Activated B cell treated with CpG ODN at 0.5 μM for 24 hours (primary cell): ENCODE measurements at regions of chr5 and their contacts with region 1.

Region 1: GRCh38 chr5:159156426-159157238 is 52.7 kb downstream of the RNF145 start:
- DNase-seq: no peak
- ATAC-seq: peak; percentile 53
- H3K4me3 Mint-ChIP-seq: peak overlapping the region; percentile 50
- H3K27ac Mint-ChIP-seq: peak overlapping the region; percentile 85
- H3K4me1 Mint-ChIP-seq: peaks cover 36% of the 10 kb centered on the region
- H3K27me3 Mint-ChIP-seq: no peaks in the 10 kb centered on the region
- CTCF ChIP-seq: peak; percentile 78

Region 2: DNA sequence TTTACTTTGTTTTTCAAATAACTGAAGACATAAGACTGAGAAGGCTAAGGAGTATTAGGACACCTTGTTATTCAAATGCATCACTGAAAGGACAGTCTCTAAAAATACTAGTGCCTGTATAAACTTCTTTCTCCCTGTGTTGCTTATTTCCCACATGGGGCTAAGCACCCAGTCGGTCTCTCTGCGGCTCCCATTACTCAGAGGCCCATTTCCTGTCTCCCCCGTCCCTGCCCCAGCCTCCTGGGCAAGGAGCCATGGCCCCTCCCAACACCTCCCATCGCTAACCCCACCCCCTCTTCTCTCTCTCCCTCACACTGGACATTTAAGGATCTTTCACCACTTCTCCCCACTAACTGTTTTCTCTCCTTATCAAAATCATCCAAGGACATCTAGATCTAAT is 138.8 kb before region 1 on chr5:
- CTCF ChIA-PET with region 1: no interaction called
- POLR2A ChIA-PET with region 1: no interaction called
- intact Hi-C with region 1: no loop called
- DNase-seq: no peak
- ATAC-seq: no peak
- H3K4me3 Mint-ChIP-seq: peak overlapping the region; percentile 7
- H3K27ac Mint-ChIP-seq: no peak overlapping the region
- H3K4me1 Mint-ChIP-seq: peaks cover 79% of the 10 kb centered on the region
- H3K27me3 Mint-ChIP-seq: no peaks in the 10 kb centered on the region
- CTCF ChIP-seq: no peak

Region 3: GRCh38 chr5:159198063-159199036 is 41.7 kb after region 1 on chr5:
- CTCF ChIA-PET with region 1: interaction called, 15 read pairs
- POLR2A ChIA-PET with region 1: interaction called, 3 read pairs
- intact Hi-C with region 1: loop called (anchors 2 kb)
- DNase-seq: no peak
- ATAC-seq: peak; percentile 98
- H3K4me3 Mint-ChIP-seq: peak overlapping the region; percentile 73
- H3K27ac Mint-ChIP-seq: peak overlapping the region; percentile 91
- H3K4me1 Mint-ChIP-seq: peaks cover 57% of the 10 kb centered on the region
- H3K27me3 Mint-ChIP-seq: no peaks in the 10 kb centered on the region
- CTCF ChIP-seq: no peak

Region 4: DNA sequence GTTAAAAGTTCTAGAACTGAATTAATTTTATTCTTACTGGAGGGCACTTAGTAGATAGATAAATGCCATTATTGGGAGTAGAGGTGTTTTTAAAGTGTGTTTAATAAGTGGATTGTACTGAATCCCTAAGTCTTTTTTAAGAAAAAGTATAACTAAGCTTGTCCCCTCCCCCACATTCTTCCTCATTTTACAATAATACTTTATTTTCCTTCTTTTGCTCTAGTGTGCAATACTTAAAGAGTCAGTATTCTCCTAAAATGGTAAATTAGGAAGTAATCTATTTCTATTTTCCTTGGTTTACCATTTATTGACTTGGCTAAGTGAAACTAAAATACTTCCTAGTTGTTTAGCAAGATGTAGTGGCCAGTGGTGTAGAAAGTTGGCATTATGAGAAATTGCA is 118.0 kb after region 1 on chr5:
- CTCF ChIA-PET with region 1: interaction called, 20 read pairs
- POLR2A ChIA-PET with region 1: no interaction called
- intact Hi-C with region 1: no loop called
- DNase-seq: no peak
- ATAC-seq: no peak
- H3K4me3 Mint-ChIP-seq: no peak overlapping the region
- H3K27ac Mint-ChIP-seq: no peak overlapping the region
- H3K4me1 Mint-ChIP-seq: peaks cover 5% of the 10 kb centered on the region
- H3K27me3 Mint-ChIP-seq: no peaks in the 10 kb centered on the region
- CTCF ChIP-seq: no peak

Region 5: DNA sequence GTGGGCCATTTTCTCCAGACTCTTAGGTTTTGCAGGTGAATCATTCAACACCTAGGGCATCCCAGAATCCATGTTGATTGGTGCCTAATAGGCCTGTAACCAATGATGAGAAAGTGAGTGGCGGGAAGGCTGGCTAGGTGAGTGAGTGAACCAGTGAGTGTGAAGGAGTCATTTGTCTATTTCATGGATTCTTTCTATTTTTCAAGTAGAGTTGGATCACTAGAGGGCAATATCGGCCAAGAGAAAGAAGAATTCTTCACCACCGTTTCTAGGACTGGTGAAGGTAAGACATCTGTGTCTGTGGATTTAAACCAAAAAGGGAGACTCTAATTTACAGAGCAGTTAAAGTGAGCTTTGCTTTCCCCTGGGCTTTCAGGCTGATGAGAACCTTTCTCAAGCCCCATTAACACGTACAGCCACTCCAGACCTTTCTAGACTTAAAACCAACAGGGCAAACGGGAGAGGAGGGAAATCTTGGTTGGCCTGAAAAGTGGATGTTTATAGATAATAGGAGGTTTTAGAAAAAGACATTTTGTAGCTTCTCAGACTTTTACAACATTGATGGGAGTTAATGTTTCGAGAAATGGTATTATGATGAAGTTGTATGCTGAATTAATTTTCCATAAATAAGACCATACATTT is 287.9 kb after region 1 on chr5:
- CTCF ChIA-PET with region 1: interaction called, 7 read pairs
- POLR2A ChIA-PET with region 1: no interaction called
- intact Hi-C with region 1: loop called (anchors 1 kb)
- DNase-seq: no peak
- ATAC-seq: peak; percentile 67
- H3K4me3 Mint-ChIP-seq: no peak overlapping the region
- H3K27ac Mint-ChIP-seq: no peak overlapping the region
- H3K4me1 Mint-ChIP-seq: peaks cover 6% of the 10 kb centered on the region
- H3K27me3 Mint-ChIP-seq: no peaks in the 10 kb centered on the region
- CTCF ChIP-seq: no peak

Region 6: GRCh38 chr5:159965031-159965837 is 808.6 kb after region 1 on chr5:
- CTCF ChIA-PET with region 1: interaction called, 5 read pairs
- POLR2A ChIA-PET with region 1: no interaction called
- intact Hi-C with region 1: loop called (anchors 5 kb)
- DNase-seq: no peak
- ATAC-seq: no peak
- H3K4me3 Mint-ChIP-seq: no peak overlapping the region
- H3K27ac Mint-ChIP-seq: no peak overlapping the region
- H3K4me1 Mint-ChIP-seq: no peaks in the 10 kb centered on the region
- H3K27me3 Mint-ChIP-seq: peaks cover 42% of the 10 kb centered on the region
- CTCF ChIP-seq: no peak

Region 7: DNA sequence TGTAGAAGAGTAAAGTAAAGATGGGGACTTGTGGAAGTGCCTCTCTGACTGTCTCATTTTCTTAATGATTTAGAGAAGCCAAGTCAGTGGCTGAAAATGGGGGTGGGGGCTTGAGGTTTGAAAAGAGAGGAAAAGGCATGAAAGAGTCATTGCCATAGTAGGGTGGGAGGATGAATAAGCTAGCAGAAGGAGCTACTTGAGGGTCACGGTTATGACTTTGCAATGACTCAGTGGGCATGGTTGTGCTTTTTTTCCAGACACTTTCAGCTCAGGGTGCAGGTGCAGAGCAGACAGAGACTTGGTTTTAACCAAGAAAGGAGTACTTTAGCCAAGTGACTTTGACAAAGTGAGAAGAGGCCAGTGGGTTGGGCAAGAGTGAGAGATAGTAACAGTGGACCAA is 1382.8 kb after region 1 on chr5:
- CTCF ChIA-PET with region 1: no interaction called
- POLR2A ChIA-PET with region 1: no interaction called
- intact Hi-C with region 1: no loop called
- DNase-seq: no peak
- ATAC-seq: no peak
- H3K4me3 Mint-ChIP-seq: no peak overlapping the region
- H3K27ac Mint-ChIP-seq: no peak overlapping the region
- H3K4me1 Mint-ChIP-seq: no peaks in the 10 kb centered on the region
- H3K27me3 Mint-ChIP-seq: peaks cover 4% of the 10 kb centered on the region
- CTCF ChIP-seq: no peak